GM12878 (cell line): ENCODE measurements at regions of chr12 and their contacts with region 1.

Region 1: DNA sequence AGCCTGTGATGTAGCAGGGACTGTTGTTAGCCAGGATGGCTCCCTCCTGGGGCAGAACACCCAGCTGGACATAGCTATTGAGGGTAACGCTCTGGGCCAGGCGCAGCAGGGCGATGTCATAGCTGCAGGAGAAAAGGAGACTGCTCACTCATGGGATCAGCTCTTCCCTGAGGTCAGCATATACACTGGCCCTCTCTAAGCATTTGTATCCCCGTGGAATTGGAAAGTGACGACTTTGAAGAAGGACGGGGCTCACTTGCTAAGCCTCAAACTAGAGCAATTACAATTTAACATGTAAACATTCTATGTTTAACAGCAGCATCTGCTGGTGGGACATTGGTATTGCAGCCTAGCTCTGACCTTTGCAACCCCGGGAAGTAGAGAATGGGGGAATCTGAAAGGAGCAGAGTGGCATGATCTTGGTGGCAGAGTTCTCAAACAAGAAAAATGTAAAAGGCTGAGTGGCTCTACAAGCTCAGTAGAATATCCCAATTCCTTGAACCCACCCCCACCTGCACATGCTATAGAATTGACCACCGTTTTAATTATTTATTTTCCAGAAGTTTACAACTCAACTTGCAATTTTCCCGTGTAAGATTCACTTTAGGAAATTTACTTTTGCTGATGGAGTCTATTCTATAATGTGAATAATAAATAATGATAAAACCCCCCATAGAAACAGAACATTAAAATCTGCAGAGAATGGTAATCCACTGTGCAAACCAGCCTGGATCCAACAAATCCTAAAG is 5.0 kb downstream of the CELA1 start:
- DNase-seq: peak; percentile 65
- ATAC-seq: peak; percentile 89
- H3K4me3 ChIP-seq: no peak overlapping the region
- H3K27ac ChIP-seq: no peak overlapping the region
- H3K4me1 ChIP-seq: peaks cover 20% of the 10 kb centered on the region
- H3K27me3 ChIP-seq: no peaks in the 10 kb centered on the region
- CTCF ChIP-seq: peak; percentile 99 to 100 (median 99); a peak in 5 of 6 replicates
- EP300 ChIP-seq: no peak
- POLR2A ChIP-seq: no peak
- RAD21 ChIP-seq: peak; percentile 98

Region 2: GRCh38 chr12:50825372-50825838 is 516.0 kb before region 1 on chr12:
- CTCF ChIA-PET with region 1: interaction called, 40 read pairs
- POLR2A ChIA-PET with region 1: no interaction called
- RAD21 ChIA-PET with region 1: interaction called, 31 read pairs
- SMC1A ChIA-PET with region 1: interaction called, 19 read pairs
- in situ Hi-C with region 1: no loop called
- intact Hi-C with region 1: loop called (anchors 1 kb)
- DNase-seq: no peak
- ATAC-seq: peak; percentile 82
- H3K4me3 ChIP-seq: no peak overlapping the region
- H3K27ac ChIP-seq: no peak overlapping the region
- H3K4me1 ChIP-seq: no peaks in the 10 kb centered on the region
- H3K27me3 ChIP-seq: no peaks in the 10 kb centered on the region
- CTCF ChIP-seq: peak in 2 of 3 experiments; percentile 30 to 53; a peak in 3 of 6 replicates
- EP300 ChIP-seq: no peak
- POLR2A ChIP-seq: no peak
- RAD21 ChIP-seq: peak; percentile 68

Region 3: GRCh38 chr12:51025836-51026638 is 315.4 kb before region 1 on chr12 and contains the start of gene SLC11A2:
- CTCF ChIA-PET with region 1: interaction called, 5 read pairs
- POLR2A ChIA-PET with region 1: no interaction called
- RAD21 ChIA-PET with region 1: interaction called, 19 read pairs
- SMC1A ChIA-PET with region 1: interaction called, 6 read pairs
- in situ Hi-C with region 1: no loop called
- intact Hi-C with region 1: no loop called
- DNase-seq: peak; percentile 72
- ATAC-seq: peak; percentile 97
- H3K4me3 ChIP-seq: peak within 1 kb of the TSS; percentile 71
- H3K27ac ChIP-seq: peak within 1 kb of the TSS; percentile 74
- H3K4me1 ChIP-seq: peaks cover 14% of the 10 kb centered on the region; the same call in 1 of the 2 replicates
- H3K27me3 ChIP-seq: no peaks in the 10 kb centered on the region; a peak in 1 of 4 replicates
- CTCF ChIP-seq: peak; percentile 7 to 13 (median 12); a peak in 2 of 6 replicates
- EP300 ChIP-seq: no peak
- POLR2A ChIP-seq: peak; percentile 83
- RAD21 ChIP-seq: no peak
- polyA plus RNA-seq, gene SLC11A2: 6.2 to 9.0 TPM

Region 4: DNA sequence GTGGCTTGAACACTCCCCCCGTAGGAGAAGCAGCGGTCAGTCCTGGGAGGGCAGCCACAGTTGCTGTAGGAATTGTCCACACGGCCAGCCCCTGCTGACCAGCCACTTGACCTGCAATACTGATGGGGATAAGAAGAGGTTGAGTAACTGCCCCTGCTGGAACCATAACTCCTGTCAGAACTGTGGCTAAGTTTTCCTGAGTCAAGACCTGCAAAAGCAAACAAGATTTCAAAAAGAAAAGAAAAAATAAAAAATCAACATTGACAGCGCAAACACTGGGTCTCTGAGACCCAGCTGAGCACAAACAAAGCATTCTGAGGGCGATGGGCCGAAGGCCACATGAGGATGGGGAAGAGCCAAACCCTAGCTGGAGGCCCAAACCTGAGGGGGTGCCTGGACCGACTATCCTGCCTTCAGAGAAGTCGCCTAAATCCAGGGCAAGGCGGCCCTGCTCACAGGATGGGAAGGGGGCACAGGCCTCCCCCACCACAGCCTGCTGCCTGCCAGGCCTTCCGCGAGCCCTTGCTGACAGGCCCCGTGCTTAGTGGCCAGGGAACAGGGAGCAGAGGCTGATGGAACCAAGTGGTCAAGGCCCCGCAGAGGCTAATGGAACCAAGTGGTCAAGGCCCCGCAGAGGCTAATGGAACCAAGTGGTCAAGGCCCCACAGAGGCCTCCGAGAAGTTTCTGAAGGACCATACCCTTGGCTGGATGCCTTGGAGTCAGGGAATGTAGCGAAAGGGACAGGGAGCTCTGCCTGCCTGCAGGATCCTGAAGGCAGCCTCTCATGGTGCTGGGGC is 142.7 kb before region 1 on chr12:
- CTCF ChIA-PET with region 1: no interaction called
- POLR2A ChIA-PET with region 1: no interaction called
- RAD21 ChIA-PET with region 1: no interaction called
- SMC1A ChIA-PET with region 1: no interaction called
- in situ Hi-C with region 1: no loop called
- intact Hi-C with region 1: no loop called
- DNase-seq: no peak
- ATAC-seq: no peak
- H3K4me3 ChIP-seq: no peak overlapping the region
- H3K27ac ChIP-seq: no peak overlapping the region
- H3K4me1 ChIP-seq: no peaks in the 10 kb centered on the region; the same call in 1 of the 2 replicates
- H3K27me3 ChIP-seq: no peaks in the 10 kb centered on the region
- CTCF ChIP-seq: no peak
- EP300 ChIP-seq: no peak
- POLR2A ChIP-seq: no peak
- RAD21 ChIP-seq: no peak

Region 5: DNA sequence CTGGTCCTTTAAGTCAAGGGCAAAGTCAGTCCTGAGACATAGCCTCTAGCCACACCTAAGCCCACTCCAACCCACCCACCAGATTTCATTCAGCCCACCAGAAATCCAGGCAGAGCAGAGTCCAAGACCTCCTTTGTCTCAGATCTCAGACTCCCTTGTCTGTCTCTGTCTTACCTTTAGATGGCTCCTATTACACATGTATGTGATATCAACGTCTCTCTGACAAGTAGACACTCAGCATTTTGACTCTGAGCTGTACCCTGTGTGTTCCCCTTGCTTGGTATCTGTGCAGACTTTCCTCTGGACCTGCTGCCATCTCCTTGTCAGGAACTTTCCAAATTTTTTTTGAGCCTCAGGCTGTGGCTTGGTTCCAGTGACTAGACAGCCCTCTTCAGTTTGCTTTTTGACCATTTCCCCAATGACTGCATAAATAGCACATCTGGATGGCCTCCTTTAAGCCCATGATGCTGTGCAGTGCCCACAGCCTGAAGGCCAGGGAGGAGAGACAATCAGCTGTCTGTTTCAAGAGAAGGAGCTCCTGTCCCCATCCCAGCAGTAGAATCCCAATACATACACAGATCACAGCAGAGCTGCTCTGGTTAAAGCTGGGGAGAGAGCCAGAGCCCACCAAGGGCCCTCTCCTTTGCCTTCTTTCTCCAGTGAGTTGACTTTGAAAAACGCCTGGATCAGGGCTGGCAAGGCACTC is 130.6 kb before region 1 on chr12:
- CTCF ChIA-PET with region 1: interaction called, 12 read pairs
- POLR2A ChIA-PET with region 1: no interaction called
- RAD21 ChIA-PET with region 1: interaction called, 3 read pairs
- SMC1A ChIA-PET with region 1: interaction called, 6 read pairs
- in situ Hi-C with region 1: no loop called
- intact Hi-C with region 1: no loop called
- DNase-seq: no peak
- ATAC-seq: peak; percentile 25; the same call in 1 of the 3 replicates
- H3K4me3 ChIP-seq: no peak overlapping the region
- H3K27ac ChIP-seq: no peak overlapping the region
- H3K4me1 ChIP-seq: no peaks in the 10 kb centered on the region
- H3K27me3 ChIP-seq: no peaks in the 10 kb centered on the region
- CTCF ChIP-seq: no peak
- EP300 ChIP-seq: no peak
- POLR2A ChIP-seq: no peak
- RAD21 ChIP-seq: no peak

Region 6: DNA sequence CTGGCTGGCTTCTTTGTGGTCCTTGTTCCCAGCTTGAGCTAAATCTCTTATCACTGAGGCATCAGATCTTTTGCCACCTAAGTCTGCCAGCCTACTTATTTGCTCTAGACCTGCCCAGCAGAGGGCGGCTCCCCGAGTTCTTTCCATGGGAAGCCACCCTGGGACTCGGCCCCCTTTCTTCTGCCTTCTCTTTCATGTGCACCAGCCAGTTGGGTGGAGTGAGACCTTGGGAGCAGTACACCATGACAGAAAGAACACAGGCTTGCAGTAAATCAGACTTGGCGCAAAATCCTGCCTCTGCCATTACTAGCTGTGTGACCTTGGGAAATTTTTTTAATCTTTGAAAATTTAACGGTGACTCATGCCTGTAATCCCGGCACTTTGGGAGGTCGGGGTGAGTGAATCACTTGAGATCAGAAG is 78.7 kb before region 1 on chr12:
- CTCF ChIA-PET with region 1: interaction called, 93 read pairs
- POLR2A ChIA-PET with region 1: interaction called, 3 read pairs
- RAD21 ChIA-PET with region 1: interaction called, 28 read pairs
- SMC1A ChIA-PET with region 1: interaction called, 67 read pairs
- in situ Hi-C with region 1: loop called (anchors 5 kb)
- intact Hi-C with region 1: loop called (anchors 1 kb)
- DNase-seq: no peak
- ATAC-seq: peak; percentile 70
- H3K4me3 ChIP-seq: no peak overlapping the region
- H3K27ac ChIP-seq: no peak overlapping the region
- H3K4me1 ChIP-seq: no peaks in the 10 kb centered on the region
- H3K27me3 ChIP-seq: no peaks in the 10 kb centered on the region
- CTCF ChIP-seq: peak; percentile 32 to 50 (median 40); a peak in 4 of 6 replicates
- EP300 ChIP-seq: no peak
- POLR2A ChIP-seq: no peak
- RAD21 ChIP-seq: 0 out of 2 replicates have a peak, but pooled peaks have one; percentile 6

Region 7: DNA sequence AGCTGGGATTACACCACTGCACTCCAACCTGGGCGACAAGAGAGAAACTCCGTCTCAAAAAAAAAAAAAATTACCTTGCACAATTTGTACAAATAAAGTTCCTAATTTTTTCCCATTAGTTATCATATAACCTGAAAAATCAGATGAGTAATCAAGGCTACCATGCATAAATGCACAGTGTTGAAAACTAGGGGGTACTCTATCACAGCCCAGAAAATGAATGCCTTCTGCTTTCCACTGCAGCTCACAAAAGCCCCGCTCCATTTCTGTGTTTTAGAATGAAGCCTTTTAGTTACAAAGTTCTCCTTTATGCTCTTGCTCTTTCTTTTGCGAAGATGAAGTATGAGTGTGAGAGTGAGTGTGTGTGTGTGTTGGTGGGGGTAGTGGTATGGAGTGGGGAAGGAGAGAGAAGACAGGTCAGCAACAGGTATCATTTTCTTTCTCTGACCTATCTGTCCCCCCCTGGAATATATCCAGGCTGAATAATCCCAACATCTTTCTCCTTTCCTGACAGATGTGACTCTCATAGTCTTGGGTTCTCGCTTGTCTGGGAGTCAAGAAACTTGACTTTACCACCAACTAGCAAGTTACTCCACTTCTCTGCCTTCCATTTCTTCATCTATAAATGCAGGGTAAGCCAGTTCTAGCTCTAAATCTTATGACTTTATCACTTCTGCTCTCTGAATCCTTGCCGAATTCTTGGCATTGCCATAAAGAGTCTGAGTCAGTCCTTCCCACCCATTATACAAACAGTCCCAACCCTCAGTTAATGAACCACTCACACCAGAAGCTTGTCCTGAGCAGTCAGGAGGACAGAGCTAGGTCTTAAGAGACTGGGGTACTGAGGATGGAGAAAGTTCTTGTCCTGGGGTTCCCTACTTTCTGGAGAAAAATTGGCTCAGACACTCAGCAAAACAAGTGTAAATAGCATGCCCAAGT is 33.5 kb before region 1 on chr12:
- CTCF ChIA-PET with region 1: interaction called, 15 read pairs
- POLR2A ChIA-PET with region 1: no interaction called
- RAD21 ChIA-PET with region 1: interaction called, 5 read pairs
- SMC1A ChIA-PET with region 1: interaction called, 8 read pairs
- in situ Hi-C with region 1: no loop called
- intact Hi-C with region 1: no loop called
- DNase-seq: no peak
- ATAC-seq: no peak
- H3K4me3 ChIP-seq: no peak overlapping the region
- H3K27ac ChIP-seq: no peak overlapping the region
- H3K4me1 ChIP-seq: peaks cover 11% of the 10 kb centered on the region
- H3K27me3 ChIP-seq: no peaks in the 10 kb centered on the region
- CTCF ChIP-seq: no peak
- EP300 ChIP-seq: no peak
- POLR2A ChIP-seq: no peak
- RAD21 ChIP-seq: no peak

Region 8: GRCh38 chr12:51351913-51352532 is 10.6 kb after region 1 on chr12:
- CTCF ChIA-PET with region 1: interaction called, 32 read pairs
- POLR2A ChIA-PET with region 1: interaction called, 4 read pairs
- RAD21 ChIA-PET with region 1: interaction called, 12 read pairs
- SMC1A ChIA-PET with region 1: interaction called, 27 read pairs
- in situ Hi-C with region 1: no loop called
- intact Hi-C with region 1: no loop called
- DNase-seq: no peak
- ATAC-seq: peak; percentile 60; the same call in 2 of the 3 replicates
- H3K4me3 ChIP-seq: no peak overlapping the region
- H3K27ac ChIP-seq: no peak overlapping the region
- H3K4me1 ChIP-seq: peaks cover 3% of the 10 kb centered on the region
- H3K27me3 ChIP-seq: no peaks in the 10 kb centered on the region
- CTCF ChIP-seq: peak; percentile 50 to 64 (median 64); a peak in 5 of 6 replicates
- EP300 ChIP-seq: no peak
- POLR2A ChIP-seq: no peak
- RAD21 ChIP-seq: peak; percentile 66

Region 9: DNA sequence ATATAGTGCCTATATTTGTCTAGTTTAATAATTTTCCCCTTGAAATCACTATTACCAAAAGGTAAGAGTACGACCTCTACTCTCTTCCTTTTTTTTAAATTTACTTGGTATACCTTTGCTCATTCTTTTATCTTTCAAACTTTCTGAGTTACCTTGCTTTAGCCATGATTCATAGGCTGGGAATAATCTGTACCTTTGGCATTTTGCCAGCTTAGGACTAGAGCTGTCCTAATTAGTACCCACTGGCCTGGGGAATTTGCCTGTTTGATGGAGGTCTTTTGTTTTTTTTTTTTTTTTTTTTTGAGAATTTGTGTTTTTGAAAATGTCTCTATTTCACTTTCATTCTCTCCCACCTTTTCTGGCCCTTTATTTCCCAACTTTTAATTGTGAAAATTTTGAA is 74.5 kb after region 1 on chr12:
- CTCF ChIA-PET with region 1: no interaction called
- POLR2A ChIA-PET with region 1: no interaction called
- RAD21 ChIA-PET with region 1: no interaction called
- SMC1A ChIA-PET with region 1: no interaction called
- in situ Hi-C with region 1: no loop called
- intact Hi-C with region 1: no loop called
- DNase-seq: no peak
- ATAC-seq: no peak
- H3K4me3 ChIP-seq: no peak overlapping the region
- H3K27ac ChIP-seq: no peak overlapping the region
- H3K4me1 ChIP-seq: no peaks in the 10 kb centered on the region
- H3K27me3 ChIP-seq: no peaks in the 10 kb centered on the region
- CTCF ChIP-seq: no peak
- EP300 ChIP-seq: no peak
- POLR2A ChIP-seq: no peak
- RAD21 ChIP-seq: no peak